ENCODE measurements at regions of chr9 and their contacts with region 1.

Region 1: DNA sequence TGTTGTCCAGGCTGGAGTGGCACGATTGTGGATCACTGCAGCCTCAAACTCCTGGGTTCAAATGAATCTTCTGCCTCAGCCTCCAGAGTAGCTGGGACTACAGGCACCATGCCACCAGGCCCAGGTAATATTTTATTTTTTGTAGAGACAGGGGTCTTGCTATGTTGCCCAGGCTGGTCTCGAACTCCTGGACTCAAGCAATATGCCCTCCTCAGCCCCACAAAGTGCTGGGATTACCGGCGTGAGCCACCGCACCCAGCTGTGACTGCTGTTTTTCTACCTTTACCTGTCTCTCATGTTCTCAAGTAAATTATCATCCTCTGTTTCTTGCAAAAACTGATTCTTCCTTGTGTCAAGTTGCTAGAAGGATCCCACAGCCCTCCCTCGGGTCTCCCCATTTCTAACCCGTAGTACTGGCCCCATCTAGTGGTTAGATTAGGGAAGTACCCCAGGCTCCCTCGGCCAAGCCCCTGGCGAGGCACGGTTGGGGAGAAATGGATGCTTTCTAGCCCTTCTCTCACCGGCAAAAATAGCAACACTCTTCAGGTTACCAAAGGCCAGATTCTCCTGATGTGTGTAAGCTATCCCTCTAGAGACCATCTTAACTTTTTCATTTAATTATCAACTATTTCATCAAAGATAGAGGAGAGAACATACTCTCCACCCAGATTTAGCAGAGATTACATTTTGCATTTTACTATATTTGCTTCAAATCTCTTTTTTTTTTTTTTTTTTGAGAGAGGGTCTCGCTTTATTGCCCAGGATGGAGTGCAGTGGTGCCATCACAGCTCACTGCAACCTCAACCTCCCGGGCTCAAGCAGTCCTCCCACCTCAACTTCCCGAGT is 19.2 kb upstream of the TOR1B start:
- DNase-seq: peak; percentile 85
- H3K4me3 ChIP-seq: no peak overlapping the region
- H3K27ac ChIP-seq: no peak overlapping the region
- H3K4me1 ChIP-seq: no peaks in the 10 kb centered on the region
- H3K27me3 ChIP-seq: peaks cover 0 to under 1% (median 0%) of the 10 kb centered on the region in 3 donors
- CTCF ChIP-seq: peak; percentile 77 to 92 (median 90)
- EP300 ChIP-seq: no peak
- POLR2A ChIP-seq: no peak

Region 2: GRCh38 chr9:129131300-129132145 is 652.2 kb before region 1 on chr9:
- intact Hi-C with region 1: loop called (anchors 2 kb)
- DNase-seq: peak; percentile 90
- H3K4me3 ChIP-seq: no peak overlapping the region
- H3K27ac ChIP-seq: peak overlapping the region in 1 of 4 donors; percentile 26
- H3K4me1 ChIP-seq: peaks cover 0 to 6% (median 2%) of the 10 kb centered on the region in 4 donors
- H3K27me3 ChIP-seq: no peaks in the 10 kb centered on the region
- CTCF ChIP-seq: peak; percentile 92 to 99 (median 96)
- EP300 ChIP-seq: no peak
- POLR2A ChIP-seq: no peak

Region 3: GRCh38 chr9:129641746-129642513 is 141.8 kb before region 1 on chr9 and contains the start of gene ASB6:
- intact Hi-C with region 1: loop called (anchors 1 kb)
- DNase-seq: peak; percentile 98
- H3K4me3 ChIP-seq: peak within 1 kb of the TSS; percentile 56 to 96 (median 80)
- H3K27ac ChIP-seq: peak within 1 kb of the TSS; percentile 83 to 91 (median 88)
- H3K4me1 ChIP-seq: peaks cover 0 to 29% (median 24%) of the 10 kb centered on the region in 4 donors
- H3K27me3 ChIP-seq: no peaks in the 10 kb centered on the region
- CTCF ChIP-seq: peak; percentile 96 to 99 (median 99)
- EP300 ChIP-seq: no peak
- POLR2A ChIP-seq: peak in 1 of 2 donors; percentile 48
- total RNA-seq, gene ASB6: 8.9 to 10.3 (median 9.8) TPM

Region 4: DNA sequence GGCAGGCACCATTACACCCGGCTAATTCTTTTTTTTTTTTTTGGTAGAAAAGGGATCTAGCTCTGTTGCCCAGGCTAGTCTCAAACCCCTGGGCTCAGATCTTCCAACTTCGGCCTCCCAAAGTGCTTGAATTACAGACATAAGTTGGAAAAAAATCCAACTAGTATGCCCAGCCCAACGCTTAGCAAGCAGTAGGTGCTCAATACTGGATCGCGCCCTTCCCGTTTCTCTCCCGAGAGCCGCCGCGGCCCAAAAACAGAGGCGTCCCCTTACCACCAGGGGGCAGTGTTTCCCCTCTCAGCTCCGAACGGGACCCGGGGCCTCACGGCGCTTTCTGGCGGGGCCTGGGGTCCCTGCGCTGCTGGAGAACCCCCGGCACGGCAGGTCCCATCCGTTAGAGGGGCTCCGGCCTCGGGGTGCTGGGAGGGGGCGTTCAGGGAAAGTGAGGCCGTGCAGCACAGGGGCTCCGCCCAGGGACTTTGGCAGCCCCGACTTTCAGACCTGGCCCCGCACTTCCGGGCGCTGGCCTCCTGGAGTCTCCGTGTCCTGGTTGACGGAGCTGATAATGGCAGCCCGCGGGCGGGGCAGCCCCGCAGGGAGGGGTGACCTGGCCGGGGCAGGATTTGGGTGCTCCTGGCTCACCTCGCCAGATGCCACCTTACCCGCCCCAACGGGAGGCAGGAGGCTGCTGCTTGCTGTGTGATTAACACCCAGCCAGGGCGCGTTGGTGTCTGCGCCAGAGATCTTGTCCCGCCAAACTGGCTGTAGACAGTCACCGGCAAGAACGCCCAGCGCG is 46.1 kb before region 1 on chr9:
- intact Hi-C with region 1: loop called (anchors 1 kb)
- DNase-seq: peak; percentile 92
- H3K4me3 ChIP-seq: peak overlapping the region; percentile 38 to 60 (median 58)
- H3K27ac ChIP-seq: peak overlapping the region; percentile 54 to 76 (median 66)
- H3K4me1 ChIP-seq: peaks cover 0 to 11% (median 5%) of the 10 kb centered on the region in 4 donors
- H3K27me3 ChIP-seq: peaks cover 0 to 7% (median 0%) of the 10 kb centered on the region in 3 donors
- CTCF ChIP-seq: peak; percentile 91 to 98 (median 96)
- EP300 ChIP-seq: no peak
- POLR2A ChIP-seq: no peak

Region 5: DNA sequence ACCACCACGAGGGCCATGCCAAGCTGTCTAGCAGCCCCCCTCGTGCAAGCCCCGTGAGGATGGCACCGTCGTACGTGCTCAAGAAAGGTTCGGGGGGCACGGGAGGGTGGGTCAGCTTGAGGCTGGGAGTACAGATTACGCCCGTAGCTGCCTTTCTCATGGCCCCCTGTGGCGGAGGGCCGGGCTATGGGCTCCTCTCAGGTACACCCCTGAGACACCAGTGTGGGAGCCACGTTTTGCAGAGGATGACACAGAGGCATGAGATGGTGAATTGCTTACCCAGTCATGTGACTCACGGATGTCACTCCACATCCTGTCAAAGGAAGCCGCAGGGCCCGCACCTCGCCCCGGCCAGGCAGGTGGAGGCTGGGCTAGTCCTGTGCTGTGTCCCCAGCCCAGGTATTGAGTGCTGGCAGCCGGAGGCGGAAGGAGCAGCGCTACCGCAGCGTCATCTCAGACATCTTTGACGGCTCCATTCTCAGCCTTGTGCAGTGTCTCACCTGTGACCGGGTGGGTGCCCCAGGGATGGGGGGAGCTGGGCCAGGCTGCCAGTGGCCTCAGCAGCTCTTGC is 85.3 kb after region 1 on chr9:
- intact Hi-C with region 1: no loop called
- DNase-seq: no peak
- H3K4me3 ChIP-seq: no peak overlapping the region
- H3K27ac ChIP-seq: no peak overlapping the region
- H3K4me1 ChIP-seq: no peaks in the 10 kb centered on the region
- H3K27me3 ChIP-seq: no peaks in the 10 kb centered on the region
- CTCF ChIP-seq: no peak
- EP300 ChIP-seq: no peak
- POLR2A ChIP-seq: no peak

Region 6: GRCh38 chr9:130107234-130107861 is 323.6 kb after region 1 on chr9:
- intact Hi-C with region 1: no loop called
- DNase-seq: peak; percentile 94
- H3K4me3 ChIP-seq: no peak overlapping the region
- H3K27ac ChIP-seq: peak overlapping the region; percentile 69 to 90 (median 79)
- H3K4me1 ChIP-seq: peaks cover 0 to 41% (median 32%) of the 10 kb centered on the region in 4 donors
- H3K27me3 ChIP-seq: no peaks in the 10 kb centered on the region
- CTCF ChIP-seq: peak; percentile 80 to 87 (median 86)
- EP300 ChIP-seq: no peak
- POLR2A ChIP-seq: no peak

Measured in sigmoid colon (tissue), 7 donors.